ENCODE measurements at regions of chr12 and their contacts with region 1.

Region 1: GRCh38 chr12:130335517-130336392 is 1.9 kb upstream of the PIWIL1 start:
- DNase-seq: peak; percentile 40 to 47
- H3K4me3 ChIP-seq: no peak overlapping the region
- H3K27ac ChIP-seq: no peak overlapping the region
- H3K4me1 ChIP-seq: peaks cover 7% of the 10 kb centered on the region in 2 donors
- H3K27me3 ChIP-seq: peaks cover 6% of the 10 kb centered on the region
- CTCF ChIP-seq: peak in 5 of 6 experiments; percentile 13 to 87 (median 65)
- POLR2A ChIP-seq: no peak

Region 2: DNA sequence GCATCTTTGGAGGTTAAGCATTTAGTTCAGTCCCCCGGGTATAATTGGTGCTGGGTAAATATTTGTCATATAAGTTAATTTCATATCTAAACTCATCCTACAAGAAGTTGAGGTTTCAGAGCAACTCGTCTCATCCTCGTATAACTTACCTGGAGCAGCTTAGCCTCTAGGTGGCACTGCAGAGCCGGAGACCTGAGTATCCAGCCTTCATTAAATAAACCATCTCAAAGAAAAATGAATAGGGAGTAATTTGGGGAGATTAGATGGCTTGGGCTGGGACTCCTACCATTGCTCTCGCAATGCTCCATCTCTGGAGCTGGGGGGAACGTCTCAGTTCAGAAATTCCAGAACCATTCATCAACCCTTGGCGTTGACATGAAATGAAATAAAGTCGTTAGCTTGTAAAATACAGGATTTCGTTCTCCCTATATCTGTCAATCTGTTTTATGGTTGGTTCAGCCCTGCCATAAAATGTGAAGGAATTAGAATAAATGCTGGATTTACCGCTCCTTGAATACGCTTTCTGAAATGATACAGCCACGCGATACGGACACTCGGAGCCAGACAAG is 309.1 kb before region 1 on chr12:
- intact Hi-C with region 1: loop called (anchors 5 kb)
- DNase-seq: peak; percentile 42 to 56
- H3K4me3 ChIP-seq: no peak overlapping the region
- H3K27ac ChIP-seq: no peak overlapping the region
- H3K4me1 ChIP-seq: no peaks in the 10 kb centered on the region
- H3K27me3 ChIP-seq: no peaks in the 10 kb centered on the region
- CTCF ChIP-seq: peak in 5 of 6 experiments; percentile 23 to 74 (median 34)
- POLR2A ChIP-seq: no peak

Region 3: GRCh38 chr12:130044991-130045621 is 290.6 kb before region 1 on chr12:
- intact Hi-C with region 1: loop called (anchors 5 kb)
- DNase-seq: no peak
- H3K4me3 ChIP-seq: no peak overlapping the region
- H3K27ac ChIP-seq: no peak overlapping the region
- H3K4me1 ChIP-seq: no peaks in the 10 kb centered on the region
- H3K27me3 ChIP-seq: no peaks in the 10 kb centered on the region
- CTCF ChIP-seq: no peak
- POLR2A ChIP-seq: no peak